HepG2 (cell line): ENCODE measurements at regions of chr12 and their contacts with region 1.

Region 1: DNA sequence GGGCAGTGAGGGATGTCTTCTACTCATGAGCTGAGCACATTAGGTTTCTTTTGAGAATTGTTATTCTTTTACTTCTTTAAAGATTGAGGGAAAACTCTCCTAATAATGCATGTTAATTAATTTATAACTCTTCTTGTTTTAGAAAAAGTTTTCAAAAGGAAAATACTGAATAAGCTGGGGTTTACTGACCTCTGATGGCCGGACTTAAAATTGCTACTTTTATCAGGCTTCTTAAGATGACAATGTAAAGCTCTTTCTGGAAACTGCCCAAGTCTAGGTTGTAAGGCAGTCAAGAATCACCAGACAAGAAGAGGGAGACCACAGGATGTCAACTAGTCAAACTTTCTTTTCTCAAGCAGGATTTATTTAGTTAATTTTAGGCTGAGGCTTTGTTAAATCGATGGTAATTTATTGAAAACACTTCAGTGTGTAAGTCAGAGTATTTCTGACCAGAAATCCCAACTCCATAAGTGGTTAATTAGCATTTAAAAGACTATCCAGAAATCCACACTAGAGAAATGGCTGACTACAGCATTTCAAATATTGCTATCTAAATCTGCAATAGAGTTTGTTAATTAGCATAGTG is 82.1 kb downstream of the AVPR1A start:
- DNase-seq: peak; percentile 33
- ATAC-seq: no peak
- H3K4me3 ChIP-seq: no peak overlapping the region
- H3K27ac ChIP-seq: no peak overlapping the region
- H3K4me1 ChIP-seq: peaks cover 7% of the 10 kb centered on the region
- H3K27me3 ChIP-seq: no peaks in the 10 kb centered on the region
- CTCF ChIP-seq: peak; percentile 58
- EP300 ChIP-seq: no peak
- POLR2A ChIP-seq: no peak
- RAD21 ChIP-seq: no peak

Region 2: DNA sequence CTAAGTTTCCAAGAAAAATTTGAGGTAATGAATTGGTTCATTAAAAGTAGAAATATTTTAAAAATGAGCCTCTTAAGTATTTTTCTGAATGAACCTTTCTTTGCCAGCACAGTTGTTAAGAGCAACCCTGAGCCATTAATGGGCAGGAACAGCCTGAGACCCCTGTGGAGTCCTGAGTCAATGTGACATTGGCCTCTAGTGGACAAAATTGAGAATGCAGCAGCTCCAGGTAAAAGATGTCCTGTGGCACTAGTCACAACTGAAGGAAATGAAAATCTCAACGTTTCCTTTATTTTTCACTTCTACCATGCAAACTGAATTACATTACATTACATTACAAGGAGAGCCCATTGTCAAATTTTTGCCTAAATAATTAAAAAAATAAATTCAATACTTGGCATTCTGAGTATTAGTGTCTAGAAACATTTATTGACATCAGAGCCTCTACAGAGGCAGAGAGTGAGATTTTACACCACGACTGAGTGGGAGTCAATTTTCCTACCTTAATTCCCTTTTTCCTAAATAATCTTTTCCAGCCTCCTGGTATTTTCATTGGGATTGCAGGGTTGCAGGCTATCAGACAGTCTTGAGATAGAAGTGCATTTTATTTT is 269.7 kb before region 1 on chr12:
- CTCF ChIA-PET with region 1: no interaction called
- POLR2A ChIA-PET with region 1: no interaction called
- in situ Hi-C with region 1: no loop called
- intact Hi-C with region 1: loop called (anchors 1 kb)
- DNase-seq: peak; percentile 56
- ATAC-seq: peak; percentile 90
- H3K4me3 ChIP-seq: no peak overlapping the region
- H3K27ac ChIP-seq: no peak overlapping the region
- H3K4me1 ChIP-seq: no peaks in the 10 kb centered on the region
- H3K27me3 ChIP-seq: no peaks in the 10 kb centered on the region
- CTCF ChIP-seq: peak; percentile 80
- EP300 ChIP-seq: no peak
- POLR2A ChIP-seq: no peak
- RAD21 ChIP-seq: peak; percentile 69

Region 3: DNA sequence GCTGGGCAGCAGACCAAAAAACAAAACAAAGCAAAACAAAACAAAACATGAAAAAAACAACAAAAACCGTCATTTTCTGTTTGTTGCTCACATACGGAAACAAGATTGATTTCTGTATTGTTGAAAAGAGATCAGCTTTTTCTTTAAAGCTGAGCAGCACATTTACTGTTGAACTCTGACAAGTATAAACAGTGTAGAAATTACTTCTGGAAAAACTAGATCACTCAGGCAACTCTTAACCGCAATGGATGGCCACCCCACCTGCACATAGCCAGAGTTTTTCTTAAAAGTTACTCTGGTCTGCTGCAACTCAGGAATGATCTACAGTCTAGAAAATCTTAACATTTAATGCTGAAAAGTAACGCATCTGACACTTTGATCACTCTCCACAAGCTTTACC is 214.9 kb before region 1 on chr12:
- CTCF ChIA-PET with region 1: no interaction called
- POLR2A ChIA-PET with region 1: no interaction called
- in situ Hi-C with region 1: no loop called
- intact Hi-C with region 1: loop called (anchors 5 kb)
- DNase-seq: no peak
- ATAC-seq: no peak
- H3K4me3 ChIP-seq: no peak overlapping the region
- H3K27ac ChIP-seq: no peak overlapping the region
- H3K4me1 ChIP-seq: peaks cover 19% of the 10 kb centered on the region
- H3K27me3 ChIP-seq: no peaks in the 10 kb centered on the region
- CTCF ChIP-seq: no peak
- EP300 ChIP-seq: no peak
- POLR2A ChIP-seq: no peak
- RAD21 ChIP-seq: no peak